Left colon (tissue), 2 donors: ENCODE measurements at regions of chr11 and their contacts with region 1.

Region 1: GRCh38 chr11:63099555-63099954 is 44.5 kb downstream of the SLC22A24 start:
- DNase-seq: no peak
- ATAC-seq: no peak

Region 2: DNA sequence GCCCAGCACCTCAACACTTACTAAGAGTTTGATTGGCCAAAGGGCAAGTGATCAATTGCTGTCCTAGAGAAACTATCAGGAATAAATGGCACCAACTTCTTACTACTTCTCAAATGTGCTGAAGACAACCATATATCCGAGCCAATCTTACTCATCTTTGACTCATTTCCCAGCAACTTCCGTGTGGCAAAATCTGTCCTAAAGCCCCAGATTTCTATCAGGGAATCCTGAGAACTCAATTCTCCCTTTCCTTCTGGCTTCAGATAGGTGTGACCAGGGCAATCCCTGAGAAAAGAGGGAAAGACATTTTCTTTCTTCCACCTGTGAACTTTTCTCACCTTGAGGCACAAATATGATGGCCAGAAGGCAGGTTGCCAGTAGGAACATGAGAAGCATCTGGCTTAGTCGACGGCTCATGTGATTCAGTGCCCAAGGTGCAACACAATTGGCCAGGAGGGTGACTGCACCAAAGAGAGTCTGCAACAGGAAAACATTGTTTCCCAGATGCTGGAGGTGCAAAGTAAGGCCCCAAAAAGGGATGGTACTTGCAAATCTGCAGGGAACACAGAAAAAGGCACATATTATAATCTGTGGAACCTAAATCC is 66.3 kb after region 1 on chr11:
- intact Hi-C with region 1: loop called in 1 of 2 experiments (anchors 10 kb)
- DNase-seq: no peak
- ATAC-seq: no peak

Region 3: DNA sequence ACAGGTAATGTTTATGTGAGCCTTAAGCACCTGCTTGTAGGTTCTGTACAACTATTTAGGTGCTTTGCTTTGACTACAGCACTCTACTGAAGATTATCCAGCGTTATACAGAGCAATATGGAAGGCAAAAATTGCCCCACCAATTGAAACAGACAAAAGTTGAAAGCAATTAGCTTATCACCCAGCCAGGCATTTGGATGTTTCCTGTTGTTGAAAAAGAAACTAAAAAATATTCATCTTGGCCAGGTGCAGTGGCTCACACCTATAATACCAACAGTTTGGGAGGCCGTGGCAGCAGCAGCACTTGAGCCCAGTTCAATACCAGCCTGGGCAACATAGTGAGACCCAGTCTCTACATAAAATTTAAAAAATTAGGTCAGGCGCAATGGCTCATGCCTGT is 553.1 kb after region 1 on chr11:
- intact Hi-C with region 1: no loop called
- DNase-seq: no peak
- ATAC-seq: no peak